Transverse colon (tissue), 4 donors: ENCODE measurements at regions of chr13 and their contacts with region 1.

Region 1: GRCh38 chr13:50911937-50912795 is 2.6 kb downstream of the RNASEH2B start:
- DNase-seq: peak; percentile 94
- H3K4me3 ChIP-seq: no peak overlapping the region
- H3K27ac ChIP-seq: peak overlapping the region; percentile 89 to 94 (median 90)
- H3K4me1 ChIP-seq: peaks cover 6 to 54% (median 20%) of the 10 kb centered on the region in 4 donors
- H3K27me3 ChIP-seq: no peaks in the 10 kb centered on the region
- CTCF ChIP-seq: peak; percentile 73 to 85 (median 83)
- EP300 ChIP-seq: no peak
- POLR2A ChIP-seq: no peak

Region 2: DNA sequence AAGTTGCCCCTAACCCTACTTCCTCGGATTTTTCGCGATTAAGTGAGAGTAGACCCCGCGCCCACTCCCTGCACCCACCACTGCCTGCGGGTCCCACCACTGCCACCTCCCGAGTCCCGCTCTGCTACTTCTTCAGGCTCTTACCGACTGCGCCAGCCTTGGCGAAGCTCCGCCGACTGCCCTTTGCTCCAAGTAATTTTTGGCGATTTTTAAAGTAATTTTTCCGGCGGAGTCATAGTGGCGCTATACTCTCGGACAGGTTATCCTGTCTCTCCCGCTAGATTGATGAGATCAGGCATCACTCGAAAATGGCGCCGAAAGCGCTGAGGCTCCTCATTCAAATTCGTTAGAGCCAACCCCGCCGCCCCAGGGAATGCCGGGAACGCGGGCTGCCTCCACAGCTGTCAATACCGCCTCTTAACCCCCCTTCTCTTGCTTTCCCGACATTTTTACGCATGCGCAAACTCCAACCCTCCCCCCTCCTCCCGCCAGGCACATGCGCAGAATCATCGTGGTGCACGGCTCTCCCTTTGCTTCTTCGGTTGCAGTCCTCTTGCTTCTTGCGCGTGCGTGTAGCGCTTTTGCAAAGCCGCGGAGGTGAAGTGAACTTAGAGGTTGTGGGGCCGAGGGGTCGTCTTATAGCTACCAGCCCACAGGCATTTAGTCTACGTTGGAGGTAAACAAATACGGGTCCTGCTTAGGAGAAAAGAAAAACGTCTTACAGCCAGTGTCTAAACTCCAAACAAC is 830.3 kb before region 1 on chr13:
- in situ Hi-C with region 1: loop called in 1 of 4 experiments (anchors 25 kb)
- intact Hi-C with region 1: loop called (anchors 10 kb)
- DNase-seq: peak; percentile 99
- H3K4me3 ChIP-seq: peak overlapping the region; percentile 62 to 86 (median 83)
- H3K27ac ChIP-seq: peak overlapping the region; percentile 91 to 96 (median 94)
- H3K4me1 ChIP-seq: peaks cover 5 to 65% (median 24%) of the 10 kb centered on the region in 4 donors
- H3K27me3 ChIP-seq: no peaks in the 10 kb centered on the region
- CTCF ChIP-seq: peak in 2 of 5 experiments; percentile 7 to 33
- EP300 ChIP-seq: no peak
- POLR2A ChIP-seq: peak; percentile 62

Region 3: DNA sequence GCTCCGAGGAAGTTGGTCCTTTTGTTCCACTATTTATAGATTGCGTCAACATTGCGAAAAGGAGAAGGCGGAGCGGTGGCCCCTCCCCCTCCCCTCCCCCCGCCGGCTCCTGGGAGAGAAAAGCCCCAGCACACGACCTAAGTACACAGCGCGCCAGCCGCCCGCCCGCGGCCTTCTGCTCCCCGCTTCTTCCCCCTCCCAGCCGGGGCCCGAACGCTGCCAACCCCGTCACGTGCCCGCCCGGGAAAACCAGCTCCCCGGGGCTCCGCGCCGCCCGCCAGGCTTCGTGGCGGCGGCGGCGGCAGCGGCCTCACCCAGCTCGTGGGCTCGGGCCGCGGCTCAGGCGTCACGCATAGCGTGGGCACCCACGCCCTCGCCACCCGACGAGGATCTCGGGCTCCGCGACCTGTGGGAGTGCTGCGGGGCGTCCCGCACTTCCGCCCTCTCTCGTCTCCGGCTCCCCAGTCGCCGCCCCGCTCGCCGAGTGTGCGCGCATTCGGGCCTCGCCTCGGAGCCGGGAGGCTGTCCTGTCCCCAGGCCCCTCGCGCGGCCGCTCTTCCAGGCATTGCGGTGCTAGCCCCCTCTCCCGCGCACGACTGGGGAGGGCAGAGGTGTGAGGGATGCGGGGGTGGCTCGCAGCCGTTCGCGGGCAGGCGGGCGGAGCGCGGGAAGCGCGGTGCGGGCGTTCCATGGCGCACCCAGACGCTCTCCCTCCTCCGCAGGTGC is 786.5 kb before region 1 on chr13:
- in situ Hi-C with region 1: loop called in 2 of 4 experiments (anchors 25 kb)
- intact Hi-C with region 1: no loop called
- DNase-seq: peak; percentile 96
- H3K4me3 ChIP-seq: peak overlapping the region; percentile 64 to 88 (median 78)
- H3K27ac ChIP-seq: peak overlapping the region; percentile 95 to 100 (median 98)
- H3K4me1 ChIP-seq: peaks cover 26 to 53% (median 42%) of the 10 kb centered on the region in 4 donors
- H3K27me3 ChIP-seq: peaks cover 31% of the 10 kb centered on the region
- CTCF ChIP-seq: no peak
- EP300 ChIP-seq: no peak
- POLR2A ChIP-seq: peak; percentile 90

Region 4: DNA sequence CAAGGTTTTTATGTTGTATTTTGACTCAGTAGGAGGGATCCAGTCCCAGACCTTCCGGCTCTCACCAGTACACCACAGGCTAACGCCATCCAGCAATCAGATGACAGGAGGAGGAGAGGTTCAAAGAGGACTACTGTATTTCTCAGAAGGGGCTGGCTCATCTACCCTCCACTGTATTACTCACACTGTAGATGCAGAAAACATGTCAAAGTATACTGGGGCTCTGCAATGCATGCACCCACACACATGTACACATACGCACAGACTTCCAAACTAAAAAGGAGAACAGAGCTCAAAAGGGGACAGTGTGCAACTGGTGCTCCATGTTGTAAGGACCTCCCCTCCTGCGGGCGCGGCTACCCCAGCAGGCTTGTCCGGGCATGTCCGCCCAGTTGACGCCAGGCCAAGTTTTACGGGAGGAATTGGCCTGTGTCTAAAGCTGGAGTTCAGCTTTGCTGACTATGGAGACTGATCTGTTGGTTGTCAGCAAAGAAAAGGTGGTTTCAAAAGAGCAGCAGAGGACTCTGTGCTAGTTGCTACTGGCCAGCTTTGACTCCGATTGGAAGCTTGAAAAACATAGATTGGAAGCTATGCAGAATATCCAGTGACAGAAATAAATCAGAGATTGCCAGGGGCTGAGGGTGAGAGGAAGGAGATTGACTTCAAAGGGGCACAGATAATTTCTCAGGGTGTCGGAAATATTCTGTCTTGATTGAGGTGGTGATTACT is 382.8 kb before region 1 on chr13:
- in situ Hi-C with region 1: loop called in 1 of 4 experiments (anchors 25 kb)
- intact Hi-C with region 1: no loop called
- DNase-seq: peak; percentile 84
- H3K4me3 ChIP-seq: no peak overlapping the region
- H3K27ac ChIP-seq: peak overlapping the region; percentile 52 to 76 (median 64)
- H3K4me1 ChIP-seq: peaks cover 20 to 43% (median 21%) of the 10 kb centered on the region in 4 donors
- H3K27me3 ChIP-seq: no peaks in the 10 kb centered on the region
- CTCF ChIP-seq: no peak
- EP300 ChIP-seq: no peak
- POLR2A ChIP-seq: no peak

Region 5: DNA sequence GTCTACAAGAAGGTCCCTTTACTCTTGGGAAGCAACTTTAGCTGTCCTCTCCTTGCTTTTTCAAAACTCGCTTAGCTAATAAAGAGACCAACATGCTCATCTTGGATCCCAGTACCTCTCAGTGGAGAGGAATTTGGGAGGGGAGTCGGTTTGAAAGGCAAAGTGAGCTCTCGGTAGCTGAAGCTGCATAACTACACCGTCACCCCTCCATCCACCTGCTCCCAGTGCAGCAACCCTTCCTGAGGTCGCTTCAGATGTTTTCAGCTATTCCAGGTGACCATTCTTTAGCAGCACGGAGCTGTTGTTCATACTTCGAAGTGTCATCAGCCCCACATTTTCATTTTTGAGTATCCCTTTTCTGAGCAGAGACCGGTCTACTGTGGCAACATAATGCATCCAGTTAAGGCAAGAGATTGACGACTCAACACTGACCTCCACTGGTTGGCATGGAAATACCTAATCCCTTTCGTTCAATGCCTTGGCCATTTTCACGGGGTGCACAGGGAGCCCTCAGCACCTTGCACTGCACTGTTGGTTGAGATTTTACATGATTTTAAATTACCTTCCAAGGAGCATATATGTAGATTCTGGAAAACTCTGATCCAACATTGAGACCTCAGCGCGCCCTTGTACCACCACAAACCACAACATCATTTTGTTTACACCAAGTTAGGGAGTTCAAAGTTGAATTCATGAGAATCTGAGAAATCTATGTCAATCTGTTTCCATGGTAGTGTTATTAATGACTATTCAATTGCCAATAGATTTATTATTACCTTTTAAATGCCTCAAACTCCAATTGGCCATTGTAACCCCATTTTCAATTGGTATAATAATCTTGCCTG is 110.9 kb before region 1 on chr13:
- in situ Hi-C with region 1: loop called in 1 of 4 experiments (anchors 10 kb)
- intact Hi-C with region 1: no loop called
- DNase-seq: peak; percentile 65
- H3K4me3 ChIP-seq: no peak overlapping the region
- H3K27ac ChIP-seq: peak overlapping the region in 1 of 4 donors; percentile 2
- H3K4me1 ChIP-seq: peaks cover 0 to 12% (median 1%) of the 10 kb centered on the region in 4 donors
- H3K27me3 ChIP-seq: no peaks in the 10 kb centered on the region
- CTCF ChIP-seq: peak; percentile 61 to 68 (median 68)
- EP300 ChIP-seq: no peak
- POLR2A ChIP-seq: no peak

Region 6: DNA sequence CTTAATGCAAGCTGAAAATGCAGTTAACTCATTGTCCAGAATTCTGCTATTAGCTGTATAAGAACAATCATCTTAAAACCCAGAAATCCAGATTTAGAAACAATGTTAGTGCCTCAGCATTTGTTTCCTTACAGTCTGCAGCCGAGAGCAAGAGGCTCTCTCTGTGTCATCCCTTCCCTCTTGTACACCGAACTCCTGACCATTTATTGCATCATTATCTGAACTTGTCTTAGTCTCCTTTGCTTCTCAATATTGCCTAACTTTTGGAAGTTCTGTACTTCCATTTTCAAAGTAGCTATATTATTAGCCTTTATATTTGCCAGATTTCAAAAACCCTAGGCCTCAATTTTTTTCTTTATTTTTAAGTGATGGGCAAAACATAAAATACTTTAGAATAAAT is 24.5 kb after region 1 on chr13:
- in situ Hi-C with region 1: no loop called
- intact Hi-C with region 1: loop called (anchors 1 kb)
- DNase-seq: no peak
- H3K4me3 ChIP-seq: no peak overlapping the region
- H3K27ac ChIP-seq: no peak overlapping the region
- H3K4me1 ChIP-seq: no peaks in the 10 kb centered on the region
- H3K27me3 ChIP-seq: no peaks in the 10 kb centered on the region
- CTCF ChIP-seq: no peak
- EP300 ChIP-seq: no peak
- POLR2A ChIP-seq: no peak